Ovary (tissue), 10 donors: ENCODE measurements at regions of chr6 and their contacts with region 1.

Region 1: GRCh38 chr6:107753778-107754177 is 70.3 kb downstream of the SCML4 start:
- DNase-seq: no peak
- H3K4me3 ChIP-seq: no peak overlapping the region
- H3K27ac ChIP-seq: no peak overlapping the region
- H3K4me1 ChIP-seq: no peaks in the 10 kb centered on the region
- H3K27me3 ChIP-seq: no peaks in the 10 kb centered on the region
- CTCF ChIP-seq: no peak
- EP300 ChIP-seq: no peak
- POLR2A ChIP-seq: no peak

Region 2: GRCh38 chr6:107645800-107646575 is 107.8 kb before region 1 on chr6:
- intact Hi-C with region 1: no loop called
- DNase-seq: no peak
- H3K4me3 ChIP-seq: no peak overlapping the region
- H3K27ac ChIP-seq: no peak overlapping the region
- H3K4me1 ChIP-seq: peaks cover 2% of the 10 kb centered on the region
- H3K27me3 ChIP-seq: no peaks in the 10 kb centered on the region
- CTCF ChIP-seq: no peak
- EP300 ChIP-seq: no peak
- POLR2A ChIP-seq: no peak

Region 3: DNA sequence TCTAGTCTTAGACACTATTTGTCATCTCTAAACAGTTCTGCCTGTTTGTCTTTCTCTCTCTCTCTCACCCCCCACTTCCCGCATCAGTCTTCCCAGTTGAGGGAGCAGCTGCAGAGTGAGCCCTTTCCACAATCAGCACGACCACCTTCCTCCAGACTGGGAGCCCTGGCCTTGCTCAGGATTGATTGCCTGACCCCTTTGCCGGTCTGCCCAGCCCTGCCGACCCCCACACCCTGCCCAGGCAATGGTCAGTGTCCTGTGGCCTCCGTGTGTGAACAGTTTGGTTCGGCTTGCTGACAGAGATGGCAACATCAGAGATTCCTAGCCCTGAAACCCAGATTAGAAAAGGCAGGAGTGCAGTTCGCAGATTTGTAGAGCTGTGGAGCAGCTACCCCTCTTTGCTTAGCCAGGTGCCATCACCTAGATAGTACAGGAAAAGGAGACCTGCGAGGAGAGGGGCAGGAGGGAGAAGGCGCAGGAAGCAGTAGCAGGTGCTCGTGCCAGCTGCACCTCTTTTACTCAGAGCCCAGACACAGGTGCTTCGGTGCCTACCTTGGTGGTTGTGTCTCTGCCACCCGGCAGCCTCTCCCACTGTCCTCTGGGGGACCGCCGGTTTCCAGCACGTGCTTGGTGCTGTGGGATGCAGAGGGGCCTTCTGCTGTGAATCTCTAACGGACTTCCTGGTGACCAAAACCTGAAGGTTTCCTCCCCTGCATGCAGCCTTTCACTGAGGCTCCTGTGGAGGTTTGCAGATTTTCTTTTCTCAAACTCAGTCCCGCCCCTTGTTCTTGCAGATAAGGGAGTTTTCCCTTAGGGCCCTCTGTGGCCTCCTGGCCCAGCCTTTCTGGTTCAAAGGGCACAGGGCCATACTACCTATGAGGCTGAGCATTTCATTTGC is 22.1 kb before region 1 on chr6:
- intact Hi-C with region 1: no loop called
- DNase-seq: no peak
- H3K4me3 ChIP-seq: no peak overlapping the region
- H3K27ac ChIP-seq: no peak overlapping the region
- H3K4me1 ChIP-seq: no peaks in the 10 kb centered on the region
- H3K27me3 ChIP-seq: no peaks in the 10 kb centered on the region
- CTCF ChIP-seq: no peak
- EP300 ChIP-seq: no peak
- POLR2A ChIP-seq: no peak

Region 4: GRCh38 chr6:107786709-107787588 is 33.2 kb after region 1 on chr6:
- intact Hi-C with region 1: loop called in 1 of 4 experiments (anchors 5 kb)
- DNase-seq: no peak
- H3K4me3 ChIP-seq: no peak overlapping the region
- H3K27ac ChIP-seq: no peak overlapping the region
- H3K4me1 ChIP-seq: no peaks in the 10 kb centered on the region
- H3K27me3 ChIP-seq: no peaks in the 10 kb centered on the region
- CTCF ChIP-seq: no peak
- EP300 ChIP-seq: no peak
- POLR2A ChIP-seq: no peak